ENCODE measurements at regions of chr11 and their contacts with region 1.

Region 1: GRCh38 chr11:70483077-70483861 is 84.9 kb downstream of the CTTN start:
- DNase-seq: no peak
- ATAC-seq: peak; percentile 58 to 72

Region 2: GRCh38 chr11:70467201-70468085 is 15.8 kb before region 1 on chr11:
- intact Hi-C with region 1: loop called in 1 of 2 experiments (anchors 1 kb)
- DNase-seq: peak; percentile 63
- ATAC-seq: peak; percentile 40 to 51

Region 3: GRCh38 chr11:70524083-70524922 is 41.0 kb after region 1 on chr11:
- intact Hi-C with region 1: no loop called
- DNase-seq: no peak
- ATAC-seq: peak in 1 of 2 donors; percentile 12

Region 4: GRCh38 chr11:70755410-70756161 is 272.3 kb after region 1 on chr11:
- intact Hi-C with region 1: loop called in 1 of 2 experiments (anchors 5 kb)
- DNase-seq: peak; percentile 82
- ATAC-seq: peak; percentile 97 to 98

Measured in left cardiac atrium (tissue), 4 donors.